B cell (primary cell): ENCODE measurements at regions of chr17 and their contacts with region 1.

Region 1: GRCh38 chr17:5042157-5043022 is 7.2 kb upstream of the SLC52A1 start:
- DNase-seq: no peak
- ATAC-seq: no peak
- H3K4me3 ChIP-seq: no peak overlapping the region
- H3K4me3 Mint-ChIP-seq: no peak overlapping the region
- H3K27ac ChIP-seq: no peak overlapping the region
- H3K27ac Mint-ChIP-seq: no peak overlapping the region
- H3K4me1 ChIP-seq: peaks cover 0 to 6% of the 10 kb centered on the region in 2 donors
- H3K4me1 Mint-ChIP-seq: peaks cover 11% of the 10 kb centered on the region
- H3K27me3 ChIP-seq: peaks cover 0 to 8% (median 0%) of the 10 kb centered on the region in 4 experiments
- H3K27me3 Mint-ChIP-seq: no peaks in the 10 kb centered on the region
- CTCF ChIP-seq: no peak

Region 2: GRCh38 chr17:4635823-4636375 is 406.5 kb before region 1 on chr17:
- CTCF ChIA-PET with region 1: no interaction called
- POLR2A ChIA-PET with region 1: no interaction called
- intact Hi-C with region 1: no loop called
- DNase-seq: peak; percentile 67
- ATAC-seq: peak; percentile 66
- H3K4me3 ChIP-seq: peak overlapping the region in 4 of 5 experiments; percentile 14 to 48 (median 36)
- H3K4me3 Mint-ChIP-seq: peak overlapping the region; percentile 69
- H3K27ac ChIP-seq: no peak overlapping the region
- H3K27ac Mint-ChIP-seq: peak overlapping the region; percentile 1
- H3K4me1 ChIP-seq: peaks cover 35 to 41% of the 10 kb centered on the region in 2 donors
- H3K4me1 Mint-ChIP-seq: peaks cover 43% of the 10 kb centered on the region
- H3K27me3 ChIP-seq: peaks cover 0 to 24% (median 6%) of the 10 kb centered on the region in 4 experiments
- H3K27me3 Mint-ChIP-seq: peaks cover 12% of the 10 kb centered on the region
- CTCF ChIP-seq: no peak

Region 3: GRCh38 chr17:4949321-4950074 is 92.9 kb before region 1 on chr17:
- CTCF ChIA-PET with region 1: no interaction called
- POLR2A ChIA-PET with region 1: no interaction called
- intact Hi-C with region 1: no loop called
- DNase-seq: peak; percentile 95
- ATAC-seq: peak; percentile 38
- H3K4me3 ChIP-seq: peak overlapping the region; percentile 59 to 99 (median 96)
- H3K4me3 Mint-ChIP-seq: peak overlapping the region; percentile 98
- H3K27ac ChIP-seq: peak overlapping the region; percentile 73 to 93
- H3K27ac Mint-ChIP-seq: peak overlapping the region; percentile 99
- H3K4me1 ChIP-seq: peaks cover 31 to 39% of the 10 kb centered on the region in 2 donors
- H3K4me1 Mint-ChIP-seq: peaks cover 40% of the 10 kb centered on the region
- H3K27me3 ChIP-seq: no peaks in the 10 kb centered on the region
- H3K27me3 Mint-ChIP-seq: no peaks in the 10 kb centered on the region
- CTCF ChIP-seq: no peak

Region 4: GRCh38 chr17:5055543-5055942 is 13.2 kb after region 1 on chr17:
- CTCF ChIA-PET with region 1: interaction called, 30 read pairs
- POLR2A ChIA-PET with region 1: no interaction called
- intact Hi-C with region 1: no loop called
- DNase-seq: no peak
- ATAC-seq: no peak
- H3K4me3 ChIP-seq: no peak overlapping the region
- H3K4me3 Mint-ChIP-seq: no peak overlapping the region
- H3K27ac ChIP-seq: no peak overlapping the region
- H3K27ac Mint-ChIP-seq: no peak overlapping the region
- H3K4me1 ChIP-seq: peaks cover 0 to 8% of the 10 kb centered on the region in 2 donors
- H3K4me1 Mint-ChIP-seq: peaks cover 17% of the 10 kb centered on the region
- H3K27me3 ChIP-seq: peaks cover 0 to 5% (median 0%) of the 10 kb centered on the region in 4 experiments
- H3K27me3 Mint-ChIP-seq: no peaks in the 10 kb centered on the region
- CTCF ChIP-seq: no peak